Activated naive CD4-positive, alpha-beta T cell treated with anti-CD3 and anti-CD28 coated beads for 36 hours (primary cell): ENCODE measurements at regions of chr21 and their contacts with region 1.

Region 1: GRCh38 chr21:31509194-31510017 is 150.1 kb upstream of the SOD1 start:
- DNase-seq: peak; percentile 96
- H3K4me3 Mint-ChIP-seq: peak overlapping the region; percentile 43
- H3K27ac Mint-ChIP-seq: peak overlapping the region; percentile 80
- H3K4me1 Mint-ChIP-seq: peaks cover 33% of the 10 kb centered on the region
- H3K27me3 Mint-ChIP-seq: no peaks in the 10 kb centered on the region

Region 2: DNA sequence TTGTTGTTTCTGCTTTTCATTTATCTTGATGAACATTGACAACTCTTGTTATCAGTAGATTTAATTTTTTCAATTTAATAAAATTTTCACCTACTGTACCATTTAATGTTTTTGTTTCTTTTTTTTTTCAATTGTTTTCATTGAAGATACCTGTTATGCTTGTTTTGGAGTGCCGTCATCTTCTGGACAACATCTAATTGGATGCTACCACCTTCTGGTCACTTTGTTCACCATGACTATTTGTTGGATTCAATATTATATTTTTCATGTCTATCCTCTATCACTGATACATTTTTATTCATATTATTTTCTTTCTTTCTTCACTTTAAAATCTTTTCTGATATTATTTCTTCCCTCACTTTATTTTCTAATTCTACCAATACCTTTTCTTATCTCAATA is 776.4 kb before region 1 on chr21:
- CTCF ChIA-PET with region 1: no interaction called
- intact Hi-C with region 1: no loop called
- DNase-seq: no peak
- H3K4me3 Mint-ChIP-seq: no peak overlapping the region
- H3K27ac Mint-ChIP-seq: no peak overlapping the region
- H3K4me1 Mint-ChIP-seq: no peaks in the 10 kb centered on the region
- H3K27me3 Mint-ChIP-seq: peaks cover 4% of the 10 kb centered on the region

Region 3: DNA sequence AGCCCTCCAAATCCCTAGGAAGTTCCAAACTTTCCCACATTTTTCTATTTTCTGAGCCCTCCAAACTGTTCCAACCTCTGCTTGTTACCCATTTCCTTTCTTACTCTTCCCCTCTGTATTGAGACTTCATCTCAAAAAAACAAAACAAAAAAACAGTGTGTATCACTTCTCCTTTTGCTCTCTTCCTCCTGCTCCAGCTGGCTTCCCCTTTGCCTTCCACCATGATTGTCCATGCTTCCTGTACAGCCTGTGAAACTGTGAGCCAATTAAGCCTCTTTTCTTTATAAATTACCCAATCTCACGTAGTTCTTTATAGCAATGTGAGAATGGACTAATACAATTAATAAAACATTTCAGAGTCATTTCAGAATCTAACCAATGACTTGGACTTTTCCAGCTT is 401.5 kb before region 1 on chr21:
- CTCF ChIA-PET with region 1: no interaction called
- intact Hi-C with region 1: loop called (anchors 5 kb)
- DNase-seq: no peak
- H3K4me3 Mint-ChIP-seq: no peak overlapping the region
- H3K27ac Mint-ChIP-seq: no peak overlapping the region
- H3K4me1 Mint-ChIP-seq: peaks cover 28% of the 10 kb centered on the region
- H3K27me3 Mint-ChIP-seq: no peaks in the 10 kb centered on the region

Region 4: DNA sequence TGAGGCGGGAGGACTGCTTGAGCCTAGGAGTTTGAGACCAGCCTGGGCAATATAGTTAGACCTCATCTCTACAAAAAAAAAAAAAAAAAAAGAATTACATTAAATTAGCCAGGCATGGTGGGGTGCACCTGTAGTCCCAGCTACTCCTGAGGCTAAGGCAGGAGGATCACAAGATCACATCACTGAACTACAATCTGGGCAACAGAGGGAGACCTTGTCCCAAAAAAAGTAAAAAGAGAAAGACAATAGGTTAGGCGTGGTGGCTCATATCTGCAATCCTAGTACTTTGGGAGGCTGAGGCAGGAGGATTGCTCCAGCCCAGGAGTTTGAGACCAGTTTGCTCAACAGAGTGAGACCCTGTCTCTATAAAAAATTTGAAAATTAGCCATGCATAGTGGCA is 295.6 kb before region 1 on chr21:
- CTCF ChIA-PET with region 1: no interaction called
- intact Hi-C with region 1: loop called (anchors 5 kb)
- DNase-seq: no peak
- H3K4me3 Mint-ChIP-seq: no peak overlapping the region
- H3K27ac Mint-ChIP-seq: no peak overlapping the region
- H3K4me1 Mint-ChIP-seq: no peaks in the 10 kb centered on the region
- H3K27me3 Mint-ChIP-seq: no peaks in the 10 kb centered on the region

Region 5: DNA sequence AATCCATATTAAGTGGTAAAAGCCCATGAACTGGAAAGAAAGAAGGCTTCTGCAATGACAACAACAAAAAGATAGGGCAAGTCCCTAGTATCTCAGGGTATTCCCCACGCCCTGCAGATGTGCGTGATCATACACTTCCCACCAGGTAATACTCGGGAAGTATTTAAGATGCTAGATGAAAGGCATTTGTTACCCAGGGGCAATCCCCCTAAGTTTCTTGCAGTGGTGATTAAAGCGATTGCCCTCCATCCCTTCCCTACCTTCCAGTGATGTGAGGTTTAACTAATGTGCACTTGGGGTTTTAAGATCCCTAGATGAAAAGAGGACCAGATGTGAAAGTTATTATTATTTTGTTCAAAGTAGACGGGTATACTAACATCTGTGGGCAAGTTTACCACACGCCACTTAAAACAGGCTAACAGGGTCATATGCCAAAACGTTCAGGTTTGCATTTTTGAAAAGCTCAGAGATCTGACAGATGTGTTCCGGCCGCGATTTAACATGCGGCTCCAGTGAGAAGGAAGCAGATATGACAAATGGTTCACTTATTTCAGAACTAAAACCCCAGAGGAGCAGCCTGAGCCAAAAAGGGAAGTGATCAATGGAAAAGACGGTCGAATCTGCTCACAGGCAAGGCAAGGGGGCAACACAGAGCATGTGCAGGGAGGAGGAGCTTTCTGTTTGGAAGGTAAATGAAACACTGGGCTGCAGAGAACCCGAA is 182.7 kb before region 1 on chr21:
- CTCF ChIA-PET with region 1: no interaction called
- intact Hi-C with region 1: loop called (anchors 1 kb)
- DNase-seq: peak; percentile 83
- H3K4me3 Mint-ChIP-seq: peak overlapping the region; percentile 45
- H3K27ac Mint-ChIP-seq: peak overlapping the region; percentile 92
- H3K4me1 Mint-ChIP-seq: peaks cover 37% of the 10 kb centered on the region
- H3K27me3 Mint-ChIP-seq: no peaks in the 10 kb centered on the region

Region 6: DNA sequence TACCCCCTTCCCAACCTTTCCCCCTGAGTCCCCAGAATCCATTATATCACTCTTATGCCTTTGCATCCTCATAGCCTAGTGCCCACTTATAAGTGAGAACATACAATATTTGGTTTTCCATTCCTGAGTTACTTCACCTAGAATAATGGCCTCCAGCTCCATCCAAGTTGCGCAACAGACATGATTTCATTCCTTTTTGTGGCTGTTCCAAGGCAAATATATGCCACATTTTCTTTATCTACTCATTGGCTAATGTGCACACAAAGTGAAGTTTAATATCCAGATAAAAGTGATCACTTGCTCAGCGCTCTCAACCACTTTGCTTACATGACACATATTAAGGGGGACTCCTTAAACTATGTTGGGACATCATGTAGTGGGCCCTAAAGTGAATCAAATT is 92.9 kb before region 1 on chr21:
- CTCF ChIA-PET with region 1: no interaction called
- intact Hi-C with region 1: loop called (anchors 5 kb)
- DNase-seq: no peak
- H3K4me3 Mint-ChIP-seq: no peak overlapping the region
- H3K27ac Mint-ChIP-seq: no peak overlapping the region
- H3K4me1 Mint-ChIP-seq: peaks cover 7% of the 10 kb centered on the region
- H3K27me3 Mint-ChIP-seq: no peaks in the 10 kb centered on the region

Region 7: GRCh38 chr21:31592963-31593560 is 83.7 kb after region 1 on chr21:
- CTCF ChIA-PET with region 1: no interaction called
- intact Hi-C with region 1: no loop called
- DNase-seq: no peak
- H3K4me3 Mint-ChIP-seq: no peak overlapping the region
- H3K27ac Mint-ChIP-seq: no peak overlapping the region
- H3K4me1 Mint-ChIP-seq: no peaks in the 10 kb centered on the region
- H3K27me3 Mint-ChIP-seq: no peaks in the 10 kb centered on the region